ENCODE measurements at regions of chr7 and their contacts with region 1.

Region 1: GRCh38 chr7:121994625-121995410 is 121.9 kb downstream of the PTPRZ1 start:
- DNase-seq: peak; percentile 8
- H3K4me3 Mint-ChIP-seq: no peak overlapping the region
- H3K27ac Mint-ChIP-seq: no peak overlapping the region
- H3K4me1 Mint-ChIP-seq: no peaks in the 10 kb centered on the region
- H3K27me3 Mint-ChIP-seq: no peaks in the 10 kb centered on the region

Region 2: GRCh38 chr7:120805636-120806388 is 1189.0 kb before region 1 on chr7:
- intact Hi-C with region 1: loop called (anchors 2 kb)
- DNase-seq: peak; percentile 17
- H3K4me3 Mint-ChIP-seq: no peak overlapping the region
- H3K27ac Mint-ChIP-seq: no peak overlapping the region
- H3K4me1 Mint-ChIP-seq: no peaks in the 10 kb centered on the region
- H3K27me3 Mint-ChIP-seq: peaks cover 6% of the 10 kb centered on the region

Region 3: GRCh38 chr7:121107923-121108498 is 886.8 kb before region 1 on chr7:
- intact Hi-C with region 1: loop called (anchors 5 kb)
- DNase-seq: no peak
- H3K4me3 Mint-ChIP-seq: no peak overlapping the region
- H3K27ac Mint-ChIP-seq: no peak overlapping the region
- H3K4me1 Mint-ChIP-seq: no peaks in the 10 kb centered on the region
- H3K27me3 Mint-ChIP-seq: peaks cover 10% of the 10 kb centered on the region

Region 4: DNA sequence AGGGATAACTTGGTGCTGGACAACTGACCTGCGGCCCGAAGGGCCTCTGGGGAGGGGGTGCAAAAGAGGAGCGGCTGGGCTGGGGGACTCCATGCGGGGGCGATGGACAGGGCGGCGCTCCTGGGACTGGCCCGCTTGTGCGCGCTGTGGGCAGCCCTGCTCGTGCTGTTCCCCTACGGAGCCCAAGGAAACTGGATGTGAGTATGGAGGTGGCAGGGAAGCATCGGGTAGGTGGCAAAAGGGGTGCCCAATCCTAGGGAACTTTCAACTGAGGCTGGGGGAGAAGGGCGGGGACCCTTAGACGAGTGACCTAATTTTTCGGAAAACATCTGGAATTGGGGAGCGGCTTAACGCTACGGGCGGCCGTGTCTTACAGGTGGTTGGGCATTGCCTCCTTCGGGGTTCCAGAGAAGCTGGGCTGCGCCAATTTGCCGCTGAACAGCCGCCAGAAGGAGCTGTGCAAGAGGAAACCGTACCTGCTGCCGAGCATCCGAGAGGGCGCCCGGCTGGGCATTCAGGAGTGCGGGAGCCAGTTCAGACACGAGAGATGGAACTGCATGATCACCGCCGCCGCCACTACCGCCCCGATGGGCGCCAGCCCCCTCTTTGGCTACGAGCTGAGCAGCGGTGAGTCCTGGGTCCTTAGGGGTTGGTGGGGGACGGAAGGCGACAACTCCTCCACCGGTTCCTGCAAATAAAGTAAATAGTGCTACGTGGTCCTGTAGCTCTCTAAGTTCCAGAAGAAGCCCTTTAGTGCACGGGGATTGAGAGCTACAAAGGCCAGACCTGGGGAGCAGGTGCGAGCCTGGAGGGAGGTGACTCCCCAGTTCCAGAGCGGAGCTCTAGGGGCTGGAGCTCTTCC is 665.4 kb before region 1 on chr7:
- intact Hi-C with region 1: loop called (anchors 10 kb)
- DNase-seq: no peak
- H3K4me3 Mint-ChIP-seq: peak overlapping the region; percentile 68
- H3K27ac Mint-ChIP-seq: no peak overlapping the region
- H3K4me1 Mint-ChIP-seq: peaks cover 21% of the 10 kb centered on the region
- H3K27me3 Mint-ChIP-seq: peaks cover 48% of the 10 kb centered on the region

Region 5: GRCh38 chr7:121547544-121548092 is 447.2 kb before region 1 on chr7:
- intact Hi-C with region 1: loop called (anchors 5 kb)
- DNase-seq: no peak
- H3K4me3 Mint-ChIP-seq: no peak overlapping the region
- H3K27ac Mint-ChIP-seq: no peak overlapping the region
- H3K4me1 Mint-ChIP-seq: peaks cover 39% of the 10 kb centered on the region
- H3K27me3 Mint-ChIP-seq: peaks cover 9% of the 10 kb centered on the region

Measured in activated T-helper 1 cell treated with anti-CD3 and anti-CD28 coated beads, Interleukin-12 subunit alpha, Interleukin-12 subunit beta, Interleukin-2, Interleukin-4 antibody, amounts not matched to agents 30 ng/mL and 10 ng/mL and 1 ng/mL, durations not matched to agents 14 hours and 24 hours and 36 hours (primary cell).